ENCODE measurements at regions of chr2 and their contacts with region 1.

Region 1: GRCh38 chr2:69715964-69716363 is 26.0 kb upstream of the ANXA4 start:
- DNase-seq: no peak
- H3K4me3 ChIP-seq: no peak overlapping the region
- H3K27ac ChIP-seq: no peak overlapping the region
- H3K4me1 ChIP-seq: no peaks in the 10 kb centered on the region
- H3K27me3 ChIP-seq: no peaks in the 10 kb centered on the region
- CTCF ChIP-seq: no peak

Region 2: GRCh38 chr2:69169655-69170389 is 546.1 kb before region 1 on chr2:
- intact Hi-C with region 1: no loop called
- DNase-seq: no peak
- H3K4me3 ChIP-seq: no peak overlapping the region
- H3K27ac ChIP-seq: peak overlapping the region; percentile 76 to 96
- H3K4me1 ChIP-seq: peaks cover 19 to 74% of the 10 kb centered on the region in 2 donors
- H3K27me3 ChIP-seq: no peaks in the 10 kb centered on the region
- CTCF ChIP-seq: no peak

Region 3: DNA sequence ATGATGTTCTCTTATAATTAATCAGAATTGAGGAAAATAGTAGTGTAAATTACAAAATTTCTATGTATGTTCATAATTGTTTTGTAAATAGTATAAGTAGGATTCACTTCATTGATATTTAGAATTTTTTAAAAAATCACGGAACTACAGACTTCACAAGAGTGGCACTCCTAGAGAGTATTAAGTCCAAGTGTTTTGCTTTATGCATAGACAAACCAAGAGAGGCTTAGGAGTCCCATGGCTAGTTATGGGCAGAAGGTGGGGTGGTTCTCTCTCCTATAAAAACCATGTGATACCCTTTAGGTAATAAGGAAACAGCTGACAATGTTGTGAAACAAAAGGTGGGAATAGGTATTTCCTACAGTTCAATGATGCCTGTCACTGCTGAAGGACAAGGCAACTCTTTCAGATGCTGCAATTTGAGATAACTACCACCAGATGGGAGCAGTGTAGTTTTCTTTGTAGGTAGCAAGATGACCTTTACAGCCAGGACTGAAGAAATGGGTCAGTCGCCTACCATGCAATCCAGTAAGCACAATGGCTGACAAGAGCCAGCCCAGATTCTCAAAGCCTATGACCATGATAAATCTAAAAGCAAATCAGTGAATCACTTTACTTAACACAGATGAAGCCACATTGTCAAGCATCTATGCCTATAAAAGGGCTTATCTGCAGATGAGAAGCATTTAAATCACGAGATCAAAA is 156.4 kb before region 1 on chr2:
- intact Hi-C with region 1: loop called (anchors 2 kb)
- DNase-seq: no peak
- H3K4me3 ChIP-seq: no peak overlapping the region
- H3K27ac ChIP-seq: no peak overlapping the region
- H3K4me1 ChIP-seq: no peaks in the 10 kb centered on the region
- H3K27me3 ChIP-seq: no peaks in the 10 kb centered on the region
- CTCF ChIP-seq: peak; percentile 47 to 66 (median 59)

Region 4: DNA sequence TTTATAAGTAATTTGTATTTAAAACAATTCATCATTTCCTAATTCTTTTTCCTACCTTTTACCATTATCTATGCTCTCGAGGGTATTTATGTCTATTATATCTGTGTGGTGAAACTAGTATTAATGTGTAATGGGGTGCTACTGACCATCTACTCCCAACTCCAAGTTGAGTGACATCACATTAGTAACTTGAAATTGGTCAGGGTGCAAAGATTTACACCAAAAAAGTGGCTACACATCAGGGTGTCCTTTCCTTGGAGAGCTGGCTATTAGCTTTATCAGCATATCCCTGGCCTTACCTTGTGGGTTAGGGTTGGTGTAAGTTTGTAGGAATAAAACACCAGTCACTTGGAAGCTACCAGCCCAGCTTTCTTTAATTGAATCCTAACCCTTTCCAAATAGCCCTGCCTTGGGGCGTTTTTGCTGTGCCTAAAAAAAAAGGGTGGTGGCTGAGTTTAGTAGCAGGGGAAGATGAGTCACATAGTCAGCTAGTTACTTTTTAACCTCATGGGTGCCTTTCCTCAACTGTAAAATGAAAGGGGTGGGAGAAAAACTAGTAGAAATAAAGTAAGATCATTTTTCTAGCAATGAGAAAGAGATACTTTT is 40.0 kb after region 1 on chr2:
- intact Hi-C with region 1: no loop called
- DNase-seq: no peak
- H3K4me3 ChIP-seq: no peak overlapping the region
- H3K27ac ChIP-seq: peak overlapping the region; percentile 25 to 56
- H3K4me1 ChIP-seq: peaks cover 3 to 17% of the 10 kb centered on the region in 2 donors
- H3K27me3 ChIP-seq: no peaks in the 10 kb centered on the region
- CTCF ChIP-seq: no peak

Measured in ascending aorta (tissue), 2 donors.